HEK293T (cell line): ENCODE measurements at regions of chr3 and their contacts with region 1.

Region 1: DNA sequence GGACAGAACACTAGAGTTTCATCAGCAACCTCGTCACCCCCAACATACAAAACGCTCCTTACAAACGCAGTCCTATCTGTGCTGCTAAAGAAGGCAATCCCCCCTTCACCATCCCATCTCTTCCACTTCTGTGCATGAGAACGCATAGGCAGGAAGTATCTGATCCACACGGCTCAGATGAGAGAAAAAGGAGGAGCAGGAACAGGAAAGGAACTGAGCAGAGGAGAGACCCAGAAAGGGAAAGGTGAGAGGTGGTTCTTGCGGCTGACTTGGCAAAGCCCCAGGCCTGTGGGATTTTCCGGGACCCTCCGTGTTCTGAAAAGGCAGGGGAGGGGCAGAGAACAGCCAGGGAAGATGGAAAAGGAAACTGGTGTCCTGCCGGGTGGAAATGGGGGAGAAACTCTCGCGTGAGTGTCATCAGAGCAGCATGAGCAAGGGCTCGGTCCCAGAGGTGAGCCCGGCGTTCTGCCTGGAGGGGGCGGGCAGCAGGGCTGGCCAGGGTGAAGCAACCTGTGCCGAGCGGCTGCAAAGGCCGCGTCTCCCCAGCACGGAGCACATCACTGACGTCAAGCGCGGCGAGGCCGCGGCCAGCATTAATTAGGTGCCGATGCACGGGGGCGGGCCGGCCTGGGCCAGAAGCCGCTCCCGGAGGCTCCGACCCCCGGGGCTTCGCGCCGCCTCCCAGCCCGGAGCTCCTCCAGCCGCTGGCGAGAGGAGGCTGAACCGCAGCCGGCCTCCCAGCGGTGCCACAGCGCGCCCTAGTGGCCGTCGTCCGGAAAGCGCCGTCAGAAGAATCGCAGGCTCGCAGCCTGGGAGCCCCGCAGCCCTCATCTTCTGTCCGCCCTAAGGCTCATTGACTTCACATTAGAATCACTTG is 35.8 kb downstream of the CPN2 start:
- DNase-seq: peak; percentile 84

Region 2: DNA sequence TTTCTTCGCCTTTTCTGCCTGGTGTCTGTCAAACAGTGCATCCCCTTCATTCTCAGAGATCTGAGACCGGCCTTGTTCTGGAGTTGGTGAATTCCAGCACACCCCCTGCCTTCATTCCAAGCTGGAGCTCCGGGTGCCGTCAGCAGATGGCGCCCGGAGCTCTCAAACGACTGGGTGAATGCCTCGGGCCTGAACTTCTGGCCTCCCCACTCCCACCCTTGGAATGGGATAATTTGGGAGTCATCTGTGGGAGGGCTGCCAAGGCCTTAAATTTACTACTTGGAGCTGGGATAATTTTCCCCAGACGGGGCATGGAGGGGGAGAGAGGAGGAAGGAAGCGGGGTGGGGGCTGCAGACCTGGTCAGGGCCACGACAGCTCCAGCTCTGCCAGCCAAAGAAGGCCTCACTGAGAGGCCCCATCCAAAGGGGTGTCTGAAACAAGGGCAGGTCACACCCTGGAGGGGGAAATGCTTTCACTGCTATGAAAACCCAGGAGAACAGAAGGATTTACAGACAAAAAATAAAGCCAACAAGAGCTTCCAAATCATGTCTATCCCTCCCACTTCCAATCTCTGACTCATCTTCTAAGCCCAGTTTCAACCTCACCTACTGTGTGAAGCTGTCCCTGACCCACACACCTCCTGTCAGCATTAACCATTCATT is 534.4 kb before region 1 on chr3:
- CTCF ChIA-PET with region 1: interaction called, 35 read pairs
- POLR2A ChIA-PET with region 1: interaction called, 7 read pairs
- DNase-seq: peak; percentile 71